HCT116 (cell line): ENCODE measurements at regions of chr6 and their contacts with region 1.

Region 1: GRCh38 chr6:38493931-38494547 is 145.7 kb downstream of the BTBD9 start:
- DNase-seq: peak; percentile 57
- ATAC-seq: peak; percentile 64; the same call in 1 of the 2 replicates
- H3K4me3 ChIP-seq: no peak overlapping the region
- H3K27ac ChIP-seq: no peak overlapping the region
- H3K4me1 ChIP-seq: peaks cover 0 to 9% of the 10 kb centered on the region in 2 experiments; a peak in 1 of 4 replicates
- H3K27me3 ChIP-seq: no peaks in the 10 kb centered on the region
- CTCF ChIP-seq: peak; percentile 70 to 93 (median 81)
- POLR2A ChIP-seq: no peak
- RAD21 ChIP-seq: peak; percentile 94

Region 2: GRCh38 chr6:37698261-37699137 is 795.5 kb before region 1 on chr6:
- CTCF ChIA-PET with region 1: interaction called, 4 read pairs
- POLR2A ChIA-PET with region 1: no interaction called
- RAD21 ChIA-PET with region 1: no interaction called
- intact Hi-C with region 1: loop called (anchors 5 kb)
- DNase-seq: peak; percentile 24
- ATAC-seq: peak; percentile 74
- H3K4me3 ChIP-seq: peak overlapping the region; percentile 62 to 78
- H3K27ac ChIP-seq: peak overlapping the region; percentile 46; the same call in 1 of the 2 replicates
- H3K4me1 ChIP-seq: peaks cover 11 to 14% of the 10 kb centered on the region in 2 experiments
- H3K27me3 ChIP-seq: no peaks in the 10 kb centered on the region
- CTCF ChIP-seq: no peak; a peak in 1 of 6 replicates
- POLR2A ChIP-seq: no peak
- RAD21 ChIP-seq: no peak

Region 3: DNA sequence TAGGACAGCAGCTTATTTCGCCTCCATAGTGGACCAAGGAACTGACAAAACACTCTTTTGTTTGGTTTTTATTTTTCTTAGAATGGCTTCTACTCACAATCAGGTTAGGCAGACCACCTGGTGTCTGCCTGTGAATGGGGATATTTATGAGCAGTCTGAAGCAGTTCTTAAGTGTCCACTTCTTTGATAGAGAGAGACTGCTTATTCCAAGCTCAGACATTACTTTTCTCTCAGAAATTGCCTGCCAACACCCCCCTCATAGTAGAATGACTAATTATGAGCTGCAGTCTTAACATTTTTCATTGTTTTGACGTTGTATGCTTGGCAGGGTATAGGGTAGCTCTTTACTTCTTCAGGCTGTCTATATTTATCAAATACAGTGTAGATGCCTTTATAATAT is 499.8 kb before region 1 on chr6:
- CTCF ChIA-PET with region 1: no interaction called
- POLR2A ChIA-PET with region 1: no interaction called
- RAD21 ChIA-PET with region 1: no interaction called
- intact Hi-C with region 1: no loop called
- DNase-seq: no peak
- ATAC-seq: no peak
- H3K4me3 ChIP-seq: no peak overlapping the region
- H3K27ac ChIP-seq: no peak overlapping the region
- H3K4me1 ChIP-seq: no peaks in the 10 kb centered on the region
- H3K27me3 ChIP-seq: no peaks in the 10 kb centered on the region
- CTCF ChIP-seq: no peak
- POLR2A ChIP-seq: no peak
- RAD21 ChIP-seq: no peak

Region 4: GRCh38 chr6:38034274-38034914 is 459.6 kb before region 1 on chr6:
- CTCF ChIA-PET with region 1: interaction called, 22 read pairs
- POLR2A ChIA-PET with region 1: no interaction called
- RAD21 ChIA-PET with region 1: no interaction called
- intact Hi-C with region 1: loop called (anchors 2 kb)
- DNase-seq: peak; percentile 23
- ATAC-seq: no peak; the same call in 1 of the 2 replicates
- H3K4me3 ChIP-seq: no peak overlapping the region
- H3K27ac ChIP-seq: no peak overlapping the region
- H3K4me1 ChIP-seq: no peaks in the 10 kb centered on the region
- H3K27me3 ChIP-seq: no peaks in the 10 kb centered on the region
- CTCF ChIP-seq: peak; percentile 39 to 69 (median 61); a peak in 5 of 6 replicates
- POLR2A ChIP-seq: no peak
- RAD21 ChIP-seq: peak; percentile 55

Region 5: GRCh38 chr6:38234934-38235682 is 258.9 kb before region 1 on chr6:
- CTCF ChIA-PET with region 1: interaction called, 4 read pairs
- POLR2A ChIA-PET with region 1: no interaction called
- RAD21 ChIA-PET with region 1: no interaction called
- intact Hi-C with region 1: loop called (anchors 5 kb)
- DNase-seq: no peak
- ATAC-seq: no peak
- H3K4me3 ChIP-seq: no peak overlapping the region
- H3K27ac ChIP-seq: no peak overlapping the region
- H3K4me1 ChIP-seq: peaks cover 0 to 11% of the 10 kb centered on the region in 2 experiments; a peak in 1 of 4 replicates
- H3K27me3 ChIP-seq: no peaks in the 10 kb centered on the region
- CTCF ChIP-seq: no peak
- POLR2A ChIP-seq: no peak
- RAD21 ChIP-seq: no peak

Region 6: GRCh38 chr6:38671885-38672467 is 177.9 kb after region 1 on chr6:
- CTCF ChIA-PET with region 1: interaction called, 3 read pairs
- POLR2A ChIA-PET with region 1: no interaction called
- RAD21 ChIA-PET with region 1: no interaction called
- intact Hi-C with region 1: loop called (anchors 10 kb)
- DNase-seq: peak; percentile 28
- ATAC-seq: peak; percentile 92
- H3K4me3 ChIP-seq: no peak overlapping the region
- H3K27ac ChIP-seq: no peak overlapping the region
- H3K4me1 ChIP-seq: no peaks in the 10 kb centered on the region
- H3K27me3 ChIP-seq: no peaks in the 10 kb centered on the region
- CTCF ChIP-seq: peak; percentile 43 to 84 (median 77); a peak in 5 of 6 replicates
- POLR2A ChIP-seq: no peak
- RAD21 ChIP-seq: peak; percentile 74